PC-3 (cell line): ENCODE measurements at regions of chr15 and their contacts with region 1.

Region 1: DNA sequence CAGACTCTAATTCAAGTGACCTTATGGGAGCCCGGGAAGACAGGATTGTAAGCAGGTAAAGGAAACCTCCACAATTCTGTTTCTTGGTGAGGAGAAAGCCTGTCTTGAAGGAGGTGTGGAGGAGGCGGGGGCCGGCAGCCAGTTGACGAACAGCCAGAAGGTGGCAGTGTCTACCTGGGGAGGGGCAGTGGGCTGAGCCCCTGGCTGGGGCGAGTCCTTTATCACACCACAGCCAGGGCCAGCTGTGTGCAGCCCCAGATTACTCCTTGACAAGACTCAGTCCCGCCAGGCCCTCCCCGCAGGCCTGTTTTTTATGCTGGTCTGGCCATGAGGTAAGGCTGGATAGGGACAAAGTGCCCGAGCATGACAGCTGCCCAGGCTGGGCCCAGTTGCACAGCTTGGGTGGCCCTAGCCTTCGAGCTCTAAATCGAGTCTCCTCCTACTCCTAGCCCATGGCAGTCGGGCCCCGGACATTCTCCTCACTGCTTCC is 40.9 kb upstream of the IDH2 start:
- DNase-seq: peak; percentile 79
- ATAC-seq: peak; percentile 95
- H3K4me3 ChIP-seq: no peak overlapping the region
- H3K27ac ChIP-seq: peak overlapping the region; percentile 4; the same call in 1 of the 2 replicates
- H3K4me1 ChIP-seq: peaks cover 13% of the 10 kb centered on the region
- H3K27me3 ChIP-seq: no peaks in the 10 kb centered on the region
- CTCF ChIP-seq: peak; percentile 94

Region 2: GRCh38 chr15:89543389-89543788 is 599.8 kb before region 1 on chr15:
- CTCF ChIA-PET with region 1: interaction called, 12 read pairs
- POLR2A ChIA-PET with region 1: no interaction called
- intact Hi-C with region 1: no loop called
- DNase-seq: no peak
- ATAC-seq: no peak
- H3K4me3 ChIP-seq: no peak overlapping the region
- H3K27ac ChIP-seq: no peak overlapping the region
- H3K4me1 ChIP-seq: no peaks in the 10 kb centered on the region
- H3K27me3 ChIP-seq: no peaks in the 10 kb centered on the region
- CTCF ChIP-seq: no peak

Region 3: GRCh38 chr15:90286678-90287077 is 143.5 kb after region 1 on chr15:
- CTCF ChIA-PET with region 1: no interaction called
- POLR2A ChIA-PET with region 1: no interaction called
- intact Hi-C with region 1: loop called (anchors 1 kb)
- DNase-seq: peak; percentile 58
- ATAC-seq: peak; percentile 69
- H3K4me3 ChIP-seq: no peak overlapping the region
- H3K27ac ChIP-seq: no peak overlapping the region
- H3K4me1 ChIP-seq: no peaks in the 10 kb centered on the region
- H3K27me3 ChIP-seq: no peaks in the 10 kb centered on the region
- CTCF ChIP-seq: peak; percentile 80